ENCODE measurements at regions of chr15 and their contacts with region 1.

Region 1: DNA sequence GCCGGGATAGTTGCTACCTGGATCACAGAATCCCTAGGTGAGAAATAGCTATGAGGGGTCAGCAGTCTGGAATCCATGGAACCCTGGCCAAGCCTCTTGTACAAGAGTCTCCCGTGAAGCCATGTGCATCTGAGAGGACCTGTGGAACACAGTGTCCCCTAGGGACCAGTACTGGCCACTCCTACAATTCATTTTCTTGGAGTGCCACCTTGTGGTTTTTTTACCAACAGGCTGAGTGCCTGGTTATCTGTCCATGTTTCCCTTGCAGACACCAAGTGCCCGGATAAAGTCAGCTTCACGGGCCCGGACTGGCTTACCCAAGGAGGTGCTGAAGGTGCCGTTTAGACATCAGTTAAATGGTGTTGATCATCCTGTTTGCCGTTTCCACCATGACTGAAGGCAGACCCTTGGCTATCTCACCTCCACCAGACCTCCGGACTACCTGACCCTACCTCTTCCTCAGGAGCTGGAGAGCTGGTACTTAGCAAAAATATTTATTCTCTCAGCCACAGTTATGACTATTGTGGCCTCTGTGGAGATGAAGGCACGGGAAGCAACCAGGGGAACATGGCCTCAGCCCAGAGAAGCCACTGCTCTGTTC is 93.9 kb downstream of the RBPMS2 start:
- DNase-seq: no peak
- ATAC-seq: peak; percentile 80
- H3K4me3 ChIP-seq: no peak overlapping the region
- H3K27ac ChIP-seq: no peak overlapping the region
- H3K4me1 ChIP-seq: no peaks in the 10 kb centered on the region
- H3K27me3 ChIP-seq: no peaks in the 10 kb centered on the region
- CTCF ChIP-seq: peak; percentile 47 to 82 (median 51); a peak in 4 of 6 replicates
- EP300 ChIP-seq: no peak
- POLR2A ChIP-seq: no peak
- RAD21 ChIP-seq: peak; percentile 70

Region 2: GRCh38 chr15:64209680-64210334 is 471.7 kb before region 1 on chr15:
- CTCF ChIA-PET with region 1: interaction called, 5 read pairs
- POLR2A ChIA-PET with region 1: no interaction called
- RAD21 ChIA-PET with region 1: interaction called, 3 read pairs
- SMC1A ChIA-PET with region 1: interaction called, 10 read pairs
- in situ Hi-C with region 1: no loop called
- intact Hi-C with region 1: loop called (anchors 10 kb)
- DNase-seq: peak; percentile 9
- ATAC-seq: peak; percentile 72
- H3K4me3 ChIP-seq: no peak overlapping the region
- H3K27ac ChIP-seq: no peak overlapping the region
- H3K4me1 ChIP-seq: no peaks in the 10 kb centered on the region
- H3K27me3 ChIP-seq: no peaks in the 10 kb centered on the region
- CTCF ChIP-seq: peak; percentile 29 to 54 (median 32); a peak in 4 of 6 replicates
- EP300 ChIP-seq: no peak
- POLR2A ChIP-seq: no peak
- RAD21 ChIP-seq: peak; percentile 78

Region 3: GRCh38 chr15:64430000-64430735 is 251.4 kb before region 1 on chr15:
- CTCF ChIA-PET with region 1: interaction called, 25 read pairs
- POLR2A ChIA-PET with region 1: interaction called, 3 read pairs
- RAD21 ChIA-PET with region 1: interaction called, 5 read pairs
- SMC1A ChIA-PET with region 1: interaction called, 27 read pairs
- in situ Hi-C with region 1: no loop called
- intact Hi-C with region 1: loop called (anchors 2 kb)
- DNase-seq: peak; percentile 65
- ATAC-seq: peak; percentile 87
- H3K4me3 ChIP-seq: 0 out of 2 replicates have a peak overlapping the region, but pooled peaks have one; percentile 6
- H3K27ac ChIP-seq: peak overlapping the region; percentile 87
- H3K4me1 ChIP-seq: peaks cover 19% of the 10 kb centered on the region
- H3K27me3 ChIP-seq: no peaks in the 10 kb centered on the region
- CTCF ChIP-seq: no peak
- EP300 ChIP-seq: peak in 1 of 2 experiments; percentile 55; a peak in 2 of 4 replicates
- POLR2A ChIP-seq: no peak
- RAD21 ChIP-seq: no peak

Region 4: DNA sequence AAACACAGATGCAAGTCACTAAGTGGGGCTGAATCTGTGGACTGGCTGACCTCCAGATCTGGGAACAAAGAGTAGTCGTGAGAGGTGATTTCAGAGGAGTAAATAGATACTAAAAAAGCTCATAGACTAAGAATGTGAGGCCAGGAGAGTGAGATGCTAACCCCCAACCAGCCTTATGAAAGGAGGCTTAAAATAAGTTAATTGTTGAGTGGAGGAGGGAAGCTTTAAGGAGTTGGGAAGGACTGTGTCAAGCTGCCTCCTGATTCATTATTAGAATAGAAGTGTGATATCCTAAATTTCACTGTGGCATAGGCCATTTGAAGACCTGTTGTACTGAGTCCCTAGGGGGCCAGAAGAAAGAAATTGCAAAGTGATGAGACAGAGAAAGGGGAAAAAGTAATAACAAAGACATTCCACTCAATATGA is 13.8 kb before region 1 on chr15:
- CTCF ChIA-PET with region 1: interaction called, 8 read pairs
- POLR2A ChIA-PET with region 1: interaction called, 5 read pairs
- RAD21 ChIA-PET with region 1: interaction called, 3 read pairs
- SMC1A ChIA-PET with region 1: interaction called, 16 read pairs
- in situ Hi-C with region 1: no loop called
- intact Hi-C with region 1: no loop called
- DNase-seq: no peak
- ATAC-seq: no peak
- H3K4me3 ChIP-seq: no peak overlapping the region
- H3K27ac ChIP-seq: no peak overlapping the region
- H3K4me1 ChIP-seq: no peaks in the 10 kb centered on the region
- H3K27me3 ChIP-seq: no peaks in the 10 kb centered on the region
- CTCF ChIP-seq: no peak
- EP300 ChIP-seq: no peak
- POLR2A ChIP-seq: no peak
- RAD21 ChIP-seq: no peak

Region 5: DNA sequence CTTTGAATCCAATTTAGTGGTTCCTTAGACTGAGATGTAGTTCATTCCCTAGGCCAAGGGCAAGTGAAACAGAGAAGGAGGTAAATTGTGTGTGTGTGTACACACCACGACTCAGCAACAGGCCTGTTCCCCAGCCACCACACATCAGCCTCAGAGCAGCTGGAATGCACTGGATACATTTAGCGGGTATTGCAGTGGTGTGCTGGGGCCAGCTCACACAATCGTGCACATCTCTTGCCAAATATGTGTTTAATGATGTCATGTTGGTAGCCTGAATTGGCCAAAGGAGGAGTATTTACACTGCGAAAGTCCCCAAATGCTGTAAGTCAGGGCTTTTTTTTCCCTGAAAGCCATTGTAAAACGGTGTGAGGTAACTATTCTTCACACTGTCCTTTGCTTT is 11.6 kb after region 1 on chr15:
- CTCF ChIA-PET with region 1: interaction called, 65 read pairs
- POLR2A ChIA-PET with region 1: interaction called, 5 read pairs
- RAD21 ChIA-PET with region 1: interaction called, 9 read pairs
- SMC1A ChIA-PET with region 1: interaction called, 41 read pairs
- in situ Hi-C with region 1: no loop called
- intact Hi-C with region 1: no loop called
- DNase-seq: no peak
- ATAC-seq: no peak
- H3K4me3 ChIP-seq: no peak overlapping the region
- H3K27ac ChIP-seq: no peak overlapping the region
- H3K4me1 ChIP-seq: peaks cover 22% of the 10 kb centered on the region
- H3K27me3 ChIP-seq: no peaks in the 10 kb centered on the region
- CTCF ChIP-seq: no peak
- EP300 ChIP-seq: no peak
- POLR2A ChIP-seq: no peak
- RAD21 ChIP-seq: no peak

Region 6: GRCh38 chr15:64699751-64700388 is 18.3 kb after region 1 on chr15:
- CTCF ChIA-PET with region 1: interaction called, 65 read pairs
- POLR2A ChIA-PET with region 1: interaction called, 5 read pairs
- RAD21 ChIA-PET with region 1: interaction called, 9 read pairs
- SMC1A ChIA-PET with region 1: interaction called, 41 read pairs
- in situ Hi-C with region 1: no loop called
- intact Hi-C with region 1: no loop called
- DNase-seq: no peak
- ATAC-seq: no peak
- H3K4me3 ChIP-seq: peak overlapping the region; percentile 94; the same call in 1 of the 2 replicates
- H3K27ac ChIP-seq: peak overlapping the region; percentile 25; the same call in 1 of the 2 replicates
- H3K4me1 ChIP-seq: peaks cover 38% of the 10 kb centered on the region
- H3K27me3 ChIP-seq: no peaks in the 10 kb centered on the region
- CTCF ChIP-seq: no peak
- EP300 ChIP-seq: no peak
- POLR2A ChIP-seq: no peak
- RAD21 ChIP-seq: no peak

Region 7: GRCh38 chr15:64706011-64706911 is 24.7 kb after region 1 on chr15:
- CTCF ChIA-PET with region 1: interaction called, 10 read pairs
- POLR2A ChIA-PET with region 1: interaction called, 4 read pairs
- RAD21 ChIA-PET with region 1: interaction called, 5 read pairs
- SMC1A ChIA-PET with region 1: interaction called, 41 read pairs
- in situ Hi-C with region 1: no loop called
- intact Hi-C with region 1: no loop called
- DNase-seq: no peak
- ATAC-seq: no peak
- H3K4me3 ChIP-seq: no peak overlapping the region
- H3K27ac ChIP-seq: no peak overlapping the region
- H3K4me1 ChIP-seq: peaks cover 5% of the 10 kb centered on the region; the same call in 1 of the 2 replicates
- H3K27me3 ChIP-seq: no peaks in the 10 kb centered on the region
- CTCF ChIP-seq: no peak
- EP300 ChIP-seq: no peak
- POLR2A ChIP-seq: no peak
- RAD21 ChIP-seq: no peak